ENCODE measurements at regions of chr11 and their contacts with region 1.

Region 1: DNA sequence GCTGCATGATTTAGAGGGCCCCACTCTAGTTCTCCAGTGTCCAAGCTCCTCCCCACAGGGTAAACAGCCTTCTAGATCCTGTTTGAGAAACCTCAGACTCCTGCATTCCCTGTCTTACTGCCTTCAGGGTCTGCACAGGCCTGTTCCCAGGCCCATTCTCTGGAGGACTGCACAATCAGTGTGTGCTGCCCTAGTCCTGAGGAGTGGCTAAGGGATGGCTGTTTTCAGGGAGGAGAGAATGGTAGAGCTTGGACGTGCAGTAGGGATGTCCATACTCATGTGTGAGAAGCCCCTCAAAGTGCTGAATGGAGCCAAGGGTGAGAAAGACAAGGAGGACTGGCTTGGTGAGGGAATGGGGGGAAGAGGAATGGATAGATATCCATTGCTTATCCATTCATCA is 103.8 kb upstream of the CCDC90B start:
- DNase-seq: no peak
- ATAC-seq: no peak
- H3K4me3 ChIP-seq: no peak overlapping the region
- H3K27ac ChIP-seq: no peak overlapping the region
- H3K4me1 ChIP-seq: no peaks in the 10 kb centered on the region
- H3K27me3 ChIP-seq: no peaks in the 10 kb centered on the region
- CTCF ChIP-seq: no peak
- POLR2A ChIP-seq: no peak

Region 2: DNA sequence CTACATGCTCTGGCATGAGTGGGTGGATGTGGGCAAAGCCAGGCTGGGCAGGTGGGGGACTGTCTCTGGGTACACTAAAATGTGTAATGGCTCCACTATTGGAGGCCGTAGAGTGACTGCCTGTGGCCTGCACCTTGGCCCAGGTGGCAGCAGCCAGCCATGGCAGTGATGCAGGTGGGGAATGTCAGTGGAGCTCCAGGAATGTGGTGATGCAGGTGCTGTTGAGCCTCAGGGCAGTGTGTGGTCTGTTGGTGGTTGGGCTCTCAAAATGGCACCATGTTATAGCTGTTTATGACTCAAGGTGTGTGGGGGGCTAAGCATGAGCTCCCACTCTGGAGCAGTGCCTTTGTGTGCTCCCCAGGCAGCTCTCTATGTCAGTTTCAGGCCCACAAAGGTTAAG is 63.7 kb before region 1 on chr11:
- in situ Hi-C with region 1: loop called in 1 of 4 experiments (anchors 10 kb)
- intact Hi-C with region 1: no loop called
- DNase-seq: no peak
- ATAC-seq: no peak
- H3K4me3 ChIP-seq: no peak overlapping the region
- H3K27ac ChIP-seq: no peak overlapping the region
- H3K4me1 ChIP-seq: no peaks in the 10 kb centered on the region
- H3K27me3 ChIP-seq: no peaks in the 10 kb centered on the region
- CTCF ChIP-seq: no peak
- POLR2A ChIP-seq: no peak

Region 3: GRCh38 chr11:83364500-83365059 is 25.4 kb before region 1 on chr11:
- in situ Hi-C with region 1: no loop called
- intact Hi-C with region 1: no loop called
- DNase-seq: no peak
- ATAC-seq: no peak
- H3K4me3 ChIP-seq: no peak overlapping the region
- H3K27ac ChIP-seq: no peak overlapping the region
- H3K4me1 ChIP-seq: no peaks in the 10 kb centered on the region
- H3K27me3 ChIP-seq: no peaks in the 10 kb centered on the region
- CTCF ChIP-seq: no peak
- POLR2A ChIP-seq: no peak

Region 4: GRCh38 chr11:83438438-83438837 is 48.5 kb after region 1 on chr11:
- in situ Hi-C with region 1: no loop called
- intact Hi-C with region 1: no loop called
- DNase-seq: no peak
- ATAC-seq: no peak
- H3K4me3 ChIP-seq: no peak overlapping the region
- H3K27ac ChIP-seq: no peak overlapping the region
- H3K4me1 ChIP-seq: no peaks in the 10 kb centered on the region
- H3K27me3 ChIP-seq: no peaks in the 10 kb centered on the region
- CTCF ChIP-seq: no peak
- POLR2A ChIP-seq: no peak